Ovary (tissue), 10 donors: ENCODE measurements at regions of chr2 and their contacts with region 1.

Region 1: GRCh38 chr2:38485734-38486133 is 108.7 kb upstream of the ATL2 start:
- DNase-seq: no peak
- H3K4me3 ChIP-seq: no peak overlapping the region
- H3K27ac ChIP-seq: no peak overlapping the region
- H3K4me1 ChIP-seq: peaks cover 4% of the 10 kb centered on the region
- H3K27me3 ChIP-seq: no peaks in the 10 kb centered on the region
- CTCF ChIP-seq: no peak
- EP300 ChIP-seq: no peak
- POLR2A ChIP-seq: no peak

Region 2: DNA sequence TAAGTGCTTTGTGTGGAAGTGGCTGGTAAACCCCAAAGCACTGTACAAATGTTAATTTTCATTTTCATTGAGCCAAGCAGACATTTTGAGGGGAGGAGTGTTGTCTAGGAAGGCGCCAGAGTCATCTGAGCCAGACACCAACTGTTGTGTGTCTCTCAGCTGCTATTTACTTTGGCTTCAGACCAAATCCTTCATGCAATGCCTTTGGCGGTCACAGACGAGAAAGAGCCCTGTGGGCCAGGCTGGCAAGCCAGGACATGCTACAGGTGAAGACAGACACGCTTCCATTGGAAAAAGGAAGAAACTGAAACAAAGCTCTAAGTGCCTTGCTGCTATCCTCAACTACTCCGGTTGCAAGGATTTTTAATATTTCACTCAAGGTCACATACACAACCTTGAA is 698.9 kb before region 1 on chr2:
- intact Hi-C with region 1: loop called in 1 of 4 experiments (anchors 10 kb)
- DNase-seq: no peak
- H3K4me3 ChIP-seq: no peak overlapping the region
- H3K27ac ChIP-seq: no peak overlapping the region
- H3K4me1 ChIP-seq: no peaks in the 10 kb centered on the region
- H3K27me3 ChIP-seq: no peaks in the 10 kb centered on the region
- CTCF ChIP-seq: no peak
- EP300 ChIP-seq: no peak
- POLR2A ChIP-seq: no peak